AG04450 (cell line): ENCODE measurements at regions of chr17 and their contacts with region 1.

Region 1: GRCh38 chr17:61837175-61838051 is 25.9 kb downstream of the BRIP1 start:
- DNase-seq: peak; percentile 45
- H3K4me3 ChIP-seq: no peak overlapping the region
- H3K27ac ChIP-seq: no peak overlapping the region
- H3K27me3 ChIP-seq: no peaks in the 10 kb centered on the region
- CTCF ChIP-seq: peak; percentile 87

Region 2: DNA sequence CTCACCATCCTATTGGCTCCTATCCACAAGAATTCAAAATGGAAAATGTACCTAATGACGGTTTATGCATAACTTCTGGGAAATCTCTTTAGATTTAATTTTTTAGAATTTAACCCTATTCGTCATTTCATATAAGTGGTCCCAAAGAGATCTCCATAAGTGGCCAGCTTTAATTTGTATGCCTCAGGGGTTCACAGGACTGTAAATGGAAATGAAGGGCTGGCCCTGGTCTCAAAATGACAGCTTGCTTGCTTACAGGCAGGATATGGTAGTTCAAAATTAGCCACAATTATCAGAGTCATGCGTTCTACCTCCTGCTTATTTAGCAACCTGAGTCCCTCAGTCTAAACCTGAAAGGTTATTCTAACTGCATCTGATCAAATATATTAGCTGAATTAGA is 239.8 kb before region 1 on chr17:
- CTCF ChIA-PET with region 1: interaction called, 11 read pairs
- POLR2A ChIA-PET with region 1: no interaction called
- DNase-seq: no peak
- H3K4me3 ChIP-seq: no peak overlapping the region
- H3K27ac ChIP-seq: no peak overlapping the region
- H3K27me3 ChIP-seq: peaks cover 16% of the 10 kb centered on the region
- CTCF ChIP-seq: no peak

Region 3: DNA sequence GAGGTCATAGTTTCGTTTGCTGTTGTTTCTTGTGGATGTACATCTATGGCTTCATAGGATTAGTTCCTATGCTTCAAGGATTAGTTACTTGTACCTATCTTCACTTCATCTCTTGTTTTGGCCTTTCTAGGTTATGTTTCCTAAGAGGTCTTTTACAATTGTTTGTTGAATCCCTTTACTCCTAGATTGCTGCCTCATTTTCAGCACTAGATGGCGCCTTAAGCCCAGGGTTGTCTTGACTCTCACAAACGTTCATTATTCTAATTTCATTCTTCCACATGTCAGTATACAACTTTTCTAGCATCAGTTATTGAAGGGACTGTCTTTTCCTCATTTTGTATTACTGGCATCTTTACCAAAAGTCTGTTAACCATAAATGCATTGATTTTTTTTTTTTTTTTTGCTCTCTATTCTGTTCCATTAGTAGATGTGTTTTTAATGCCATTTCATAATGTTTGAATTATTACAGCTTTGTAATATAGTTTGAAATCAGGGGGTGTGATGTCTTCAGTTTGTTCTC is 201.4 kb before region 1 on chr17:
- CTCF ChIA-PET with region 1: interaction called, 188 read pairs
- POLR2A ChIA-PET with region 1: no interaction called
- DNase-seq: peak; percentile 29
- H3K4me3 ChIP-seq: no peak overlapping the region
- H3K27ac ChIP-seq: no peak overlapping the region
- H3K27me3 ChIP-seq: no peaks in the 10 kb centered on the region
- CTCF ChIP-seq: peak; percentile 83

Region 4: GRCh38 chr17:61647047-61647446 is 190.4 kb before region 1 on chr17:
- CTCF ChIA-PET with region 1: interaction called, 32 read pairs
- POLR2A ChIA-PET with region 1: no interaction called
- DNase-seq: no peak
- H3K4me3 ChIP-seq: no peak overlapping the region
- H3K27ac ChIP-seq: peak overlapping the region; percentile 22
- H3K27me3 ChIP-seq: no peaks in the 10 kb centered on the region
- CTCF ChIP-seq: no peak

Region 5: DNA sequence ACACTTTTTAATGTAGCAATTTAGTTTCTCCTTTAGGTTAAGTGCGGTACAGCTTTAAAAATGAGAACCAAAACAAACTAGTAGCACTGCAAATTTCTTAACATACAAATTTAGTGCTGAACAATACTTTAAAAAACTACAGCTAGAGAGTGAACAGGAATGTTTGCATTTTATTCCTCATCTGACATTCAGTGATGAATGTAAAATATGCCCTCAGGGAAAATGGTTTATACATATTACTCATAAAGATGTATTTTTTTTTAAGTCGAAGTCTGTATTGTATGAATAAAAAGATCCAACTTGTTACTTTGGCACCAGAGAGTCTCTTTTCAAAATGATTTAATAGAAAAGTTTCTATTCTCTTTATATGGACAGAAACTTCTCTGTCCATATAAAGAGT is 70.9 kb before region 1 on chr17:
- CTCF ChIA-PET with region 1: no interaction called
- POLR2A ChIA-PET with region 1: no interaction called
- DNase-seq: no peak
- H3K4me3 ChIP-seq: no peak overlapping the region
- H3K27ac ChIP-seq: no peak overlapping the region
- H3K27me3 ChIP-seq: no peaks in the 10 kb centered on the region
- CTCF ChIP-seq: no peak